ENCODE measurements at regions of chr16 and their contacts with region 1.

Region 1: DNA sequence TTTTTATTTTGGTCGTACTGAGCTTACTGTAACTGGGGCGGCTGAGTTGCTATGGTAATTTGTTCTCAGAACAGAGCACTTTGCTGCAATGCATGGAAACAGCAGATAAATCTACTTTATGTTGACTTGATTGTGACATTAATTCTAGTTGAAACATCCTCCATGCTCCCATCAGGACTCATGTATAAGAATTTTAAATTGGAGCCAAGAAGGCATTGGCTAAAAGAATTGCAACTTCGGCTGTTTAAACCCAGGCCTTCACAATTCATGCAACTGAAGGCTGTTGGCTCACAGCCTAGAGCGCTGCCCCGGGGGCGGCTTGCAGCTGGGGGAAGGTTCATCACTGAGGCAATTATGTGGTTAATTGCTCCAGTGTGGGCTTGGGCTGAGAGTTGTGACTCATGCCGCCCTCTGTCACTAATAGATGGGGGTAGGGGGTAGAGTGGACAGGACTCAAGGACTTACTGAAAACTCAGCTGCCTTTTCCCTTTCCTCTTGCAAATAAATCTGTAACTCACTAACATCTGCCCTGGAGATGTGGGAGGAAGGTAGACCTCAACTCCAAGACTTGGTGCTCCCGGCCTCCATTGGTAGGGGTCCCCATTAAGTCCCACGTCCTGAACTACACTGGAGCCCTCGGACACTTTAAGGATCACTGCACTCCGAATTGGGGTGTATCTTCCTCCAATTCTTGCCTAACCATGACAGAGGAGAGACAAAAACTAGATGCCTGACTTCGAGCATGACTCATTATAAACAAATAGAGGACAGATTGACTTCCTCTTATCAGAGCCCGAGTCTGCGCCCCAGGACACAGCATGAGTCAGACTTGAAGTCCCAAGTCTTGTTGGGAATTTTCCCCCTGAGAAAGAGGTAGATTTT is 37.5 kb downstream of the ERCC4 start:
- DNase-seq: no peak

Region 2: DNA sequence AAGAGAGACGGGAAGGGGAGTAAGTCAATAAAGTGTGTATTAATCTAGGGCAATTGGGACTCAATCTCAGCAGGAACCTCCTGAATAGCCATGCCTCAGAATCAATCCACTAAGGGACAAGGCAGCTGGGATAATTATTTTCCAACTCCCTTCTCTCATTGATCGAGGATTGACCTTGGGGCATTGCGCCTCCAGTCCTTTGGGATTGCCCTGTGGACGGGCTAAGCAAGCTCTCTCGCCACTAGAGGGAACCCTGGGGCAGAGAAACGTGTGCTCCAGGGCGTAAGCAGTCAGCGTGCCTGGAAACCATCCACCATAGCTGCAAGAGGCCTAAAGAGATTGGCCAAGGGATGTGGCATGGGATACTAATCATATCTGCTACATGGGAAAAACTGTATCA is 91.4 kb before region 1 on chr16:
- intact Hi-C with region 1: no loop called
- DNase-seq: peak; percentile 77

Region 3: DNA sequence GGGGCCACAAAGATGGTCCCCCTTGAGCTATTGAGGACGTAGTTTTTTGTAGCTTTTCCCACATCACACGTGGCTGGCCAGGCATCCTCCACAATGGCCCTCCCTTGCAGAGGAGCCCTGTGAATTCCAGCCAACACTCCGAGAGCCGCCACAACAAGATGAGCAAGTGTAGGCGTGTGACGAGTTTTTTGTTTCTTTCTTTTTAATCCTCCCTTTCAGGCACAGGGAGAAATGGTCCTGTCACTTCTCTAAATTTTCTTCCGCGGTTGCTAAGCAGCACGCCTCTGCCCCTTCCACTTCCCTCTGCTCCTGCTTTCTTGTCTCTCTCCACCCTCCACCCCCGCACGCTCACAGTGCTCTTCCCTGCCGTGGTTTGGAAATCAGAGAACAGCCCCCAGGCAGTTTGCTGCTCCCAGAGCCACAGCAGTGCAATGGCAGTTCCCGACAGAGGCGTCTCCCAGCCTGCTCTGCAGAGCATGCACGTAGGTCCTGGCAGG is 45.7 kb after region 1 on chr16:
- intact Hi-C with region 1: no loop called
- DNase-seq: peak; percentile 84

Region 4: GRCh38 chr16:14015948-14016347 is 58.5 kb after region 1 on chr16:
- intact Hi-C with region 1: loop called (anchors 5 kb)
- DNase-seq: no peak

Measured in cardiac septum (tissue), 1 donor.